T-cell (primary cell): ENCODE measurements at regions of chr16 and their contacts with region 1.

Region 1: GRCh38 chr16:84959784-84960417 is 51.4 kb downstream of the ZDHHC7 start:
- DNase-seq: no peak
- ATAC-seq: no peak
- H3K4me3 ChIP-seq: no peak overlapping the region
- H3K4me3 Mint-ChIP-seq: no peak overlapping the region
- H3K27ac ChIP-seq: no peak overlapping the region
- H3K27ac Mint-ChIP-seq: no peak overlapping the region
- H3K4me1 ChIP-seq: no peaks in the 10 kb centered on the region
- H3K4me1 Mint-ChIP-seq: no peaks in the 10 kb centered on the region
- H3K27me3 ChIP-seq: peaks cover 0 to 35% of the 10 kb centered on the region in 2 experiments
- H3K27me3 Mint-ChIP-seq: peaks cover 0 to 4% of the 10 kb centered on the region in 2 donors

Region 2: GRCh38 chr16:84449171-84450140 is 510.4 kb before region 1 on chr16:
- CTCF ChIA-PET with region 1: no interaction called
- POLR2A ChIA-PET with region 1: no interaction called
- DNase-seq: no peak
- ATAC-seq: no peak
- H3K4me3 ChIP-seq: no peak overlapping the region
- H3K4me3 Mint-ChIP-seq: no peak overlapping the region
- H3K27ac ChIP-seq: no peak overlapping the region
- H3K27ac Mint-ChIP-seq: no peak overlapping the region
- H3K4me1 ChIP-seq: no peaks in the 10 kb centered on the region
- H3K4me1 Mint-ChIP-seq: no peaks in the 10 kb centered on the region
- H3K27me3 ChIP-seq: peaks cover 0 to 17% of the 10 kb centered on the region in 2 experiments
- H3K27me3 Mint-ChIP-seq: peaks cover 3 to 5% of the 10 kb centered on the region in 2 donors

Region 3: GRCh38 chr16:84851192-84852127 is 108.4 kb before region 1 on chr16:
- CTCF ChIA-PET with region 1: no interaction called
- POLR2A ChIA-PET with region 1: no interaction called
- DNase-seq: no peak
- ATAC-seq: no peak
- H3K4me3 ChIP-seq: no peak overlapping the region
- H3K4me3 Mint-ChIP-seq: no peak overlapping the region
- H3K27ac ChIP-seq: no peak overlapping the region
- H3K27ac Mint-ChIP-seq: peak overlapping the region in 1 of 2 donors; percentile 6
- H3K4me1 ChIP-seq: no peaks in the 10 kb centered on the region
- H3K4me1 Mint-ChIP-seq: no peaks in the 10 kb centered on the region
- H3K27me3 ChIP-seq: peaks cover 2 to 35% of the 10 kb centered on the region in 2 experiments
- H3K27me3 Mint-ChIP-seq: peaks cover 0 to 3% of the 10 kb centered on the region in 2 donors

Region 4: DNA sequence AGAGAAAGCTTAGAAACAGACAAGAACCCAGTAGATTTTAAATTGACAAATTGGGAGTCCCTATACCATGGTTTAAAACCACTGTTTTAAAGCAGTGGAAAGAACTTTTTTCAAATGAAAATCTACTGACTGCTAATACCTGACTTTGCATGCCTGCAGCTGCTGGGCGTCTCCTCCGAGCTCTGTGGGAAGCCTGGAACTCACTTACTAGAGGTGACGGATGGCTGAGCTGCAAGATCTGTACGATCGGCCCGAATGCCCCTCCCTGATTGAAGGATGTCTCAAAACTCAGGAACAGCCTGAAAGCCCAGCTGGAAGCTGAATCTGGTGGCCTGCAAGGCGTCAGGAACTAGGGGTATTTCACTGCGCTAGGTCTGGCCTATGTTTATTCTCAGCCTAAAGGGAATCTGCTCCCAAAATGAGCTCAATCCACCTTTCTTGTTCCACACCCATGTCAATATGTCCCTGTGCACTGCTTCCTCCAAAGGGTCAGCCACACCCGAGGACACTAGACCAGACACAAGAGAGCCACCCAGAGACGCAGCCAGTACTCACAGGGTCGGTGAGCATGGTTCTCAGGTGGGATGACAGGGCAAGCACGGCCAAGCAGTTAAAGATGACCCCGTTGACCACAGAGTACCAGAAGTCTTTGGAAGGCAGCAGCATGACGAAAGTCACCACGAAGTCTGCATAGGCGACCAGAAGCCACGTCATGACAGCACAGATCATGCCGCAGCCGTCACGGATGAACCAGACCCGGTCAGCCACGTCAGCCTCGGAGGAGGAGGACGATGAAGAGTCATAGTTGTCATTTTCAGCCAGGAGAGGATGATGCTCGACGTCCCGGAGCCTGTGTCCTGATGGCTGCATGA is 30.1 kb after region 1 on chr16:
- CTCF ChIA-PET with region 1: no interaction called
- POLR2A ChIA-PET with region 1: interaction called in 1 of 2 experiments, 13 read pairs
- DNase-seq: no peak
- ATAC-seq: no peak
- H3K4me3 ChIP-seq: no peak overlapping the region
- H3K4me3 Mint-ChIP-seq: no peak overlapping the region
- H3K27ac ChIP-seq: no peak overlapping the region
- H3K27ac Mint-ChIP-seq: peak overlapping the region in 1 of 2 donors; percentile 2
- H3K4me1 ChIP-seq: no peaks in the 10 kb centered on the region
- H3K4me1 Mint-ChIP-seq: peaks cover 15 to 19% (median 18%) of the 10 kb centered on the region in 3 donors
- H3K27me3 ChIP-seq: no peaks in the 10 kb centered on the region
- H3K27me3 Mint-ChIP-seq: no peaks in the 10 kb centered on the region

Region 5: DNA sequence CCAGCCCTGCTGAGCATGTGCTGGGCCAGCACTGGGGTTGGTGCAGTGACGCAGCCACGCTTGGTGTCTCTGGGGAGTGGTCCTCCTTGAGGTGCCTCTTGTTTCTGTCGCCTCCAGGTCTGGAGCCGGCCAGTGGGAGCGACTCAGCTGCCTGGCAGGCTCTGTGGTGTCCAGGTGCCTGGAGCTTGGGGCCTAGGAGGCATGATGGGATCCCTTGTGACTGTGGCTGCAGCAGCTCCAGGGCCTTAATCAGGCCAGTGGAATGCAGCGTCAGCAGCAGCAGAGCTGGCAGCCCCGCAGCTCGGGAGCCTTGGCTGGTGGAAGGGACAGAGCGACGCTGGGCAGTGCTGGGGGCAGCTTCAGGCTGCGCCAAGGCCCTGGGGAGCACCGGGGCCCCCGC is 227.1 kb after region 1 on chr16:
- CTCF ChIA-PET with region 1: no interaction called
- POLR2A ChIA-PET with region 1: no interaction called
- DNase-seq: no peak
- ATAC-seq: no peak
- H3K4me3 ChIP-seq: no peak overlapping the region
- H3K4me3 Mint-ChIP-seq: no peak overlapping the region
- H3K27ac ChIP-seq: no peak overlapping the region
- H3K27ac Mint-ChIP-seq: no peak overlapping the region
- H3K4me1 ChIP-seq: no peaks in the 10 kb centered on the region
- H3K4me1 Mint-ChIP-seq: no peaks in the 10 kb centered on the region
- H3K27me3 ChIP-seq: peaks cover 0 to 36% of the 10 kb centered on the region in 2 experiments
- H3K27me3 Mint-ChIP-seq: peaks cover 15 to 21% of the 10 kb centered on the region in 2 donors

Region 6: GRCh38 chr16:85437166-85438055 is 477.5 kb after region 1 on chr16:
- CTCF ChIA-PET with region 1: no interaction called
- POLR2A ChIA-PET with region 1: no interaction called
- DNase-seq: no peak
- ATAC-seq: no peak
- H3K4me3 ChIP-seq: no peak overlapping the region
- H3K4me3 Mint-ChIP-seq: no peak overlapping the region
- H3K27ac ChIP-seq: no peak overlapping the region
- H3K27ac Mint-ChIP-seq: no peak overlapping the region
- H3K4me1 ChIP-seq: no peaks in the 10 kb centered on the region
- H3K4me1 Mint-ChIP-seq: no peaks in the 10 kb centered on the region
- H3K27me3 ChIP-seq: peaks cover 0 to 2% of the 10 kb centered on the region in 2 experiments
- H3K27me3 Mint-ChIP-seq: no peaks in the 10 kb centered on the region